AG04449 (cell line): ENCODE measurements at regions of chr3 and their contacts with region 1.

Region 1: DNA sequence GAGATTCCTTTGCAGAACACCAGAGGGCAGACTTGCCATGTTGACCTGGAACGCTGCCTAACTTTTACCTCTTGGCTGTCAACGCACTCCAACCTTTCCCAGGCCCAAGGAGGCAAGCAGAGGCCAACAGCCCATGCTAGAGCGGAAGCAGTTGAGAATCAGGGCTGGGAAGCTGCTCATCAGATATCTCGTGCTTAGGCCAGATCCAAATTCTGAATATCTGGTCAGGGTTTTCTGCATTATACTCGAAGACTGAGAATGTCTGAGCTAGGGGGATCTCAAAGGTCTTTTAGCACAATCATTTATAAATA is 2.5 kb downstream of the XIRP1 start:
- DNase-seq: no peak
- H3K4me3 ChIP-seq: no peak overlapping the region
- CTCF ChIP-seq: peak; percentile 82

Region 2: GRCh38 chr3:39118079-39118478 is 71.8 kb before region 1 on chr3:
- CTCF ChIA-PET with region 1: interaction called, 115 read pairs
- POLR2A ChIA-PET with region 1: no interaction called
- DNase-seq: no peak
- H3K4me3 ChIP-seq: no peak overlapping the region
- CTCF ChIP-seq: no peak

Region 3: GRCh38 chr3:39166134-39166731 is 23.7 kb before region 1 on chr3:
- CTCF ChIA-PET with region 1: interaction called, 13 read pairs
- POLR2A ChIA-PET with region 1: no interaction called
- DNase-seq: peak; percentile 89
- H3K4me3 ChIP-seq: no peak overlapping the region
- CTCF ChIP-seq: peak; percentile 0

Region 4: DNA sequence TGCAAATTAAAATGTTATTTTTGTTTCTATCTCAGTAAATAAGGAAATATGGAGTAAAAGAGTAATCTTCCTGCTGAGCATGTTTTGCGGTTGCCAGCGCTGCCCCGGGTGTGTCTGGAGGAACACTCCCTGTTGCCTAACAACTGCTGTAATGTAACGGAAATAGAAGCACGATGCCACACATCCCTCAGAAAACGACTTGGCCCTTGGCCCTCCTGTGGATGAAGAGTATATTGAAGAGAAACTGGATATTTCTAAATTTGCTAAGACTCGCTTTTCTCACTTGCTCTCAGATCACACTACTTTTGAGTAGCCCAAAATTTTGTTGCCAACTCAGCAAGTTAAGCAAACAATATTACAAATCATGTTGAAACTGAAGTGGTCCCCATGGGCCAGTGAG is 71.0 kb after region 1 on chr3:
- CTCF ChIA-PET with region 1: interaction called, 14 read pairs
- POLR2A ChIA-PET with region 1: no interaction called
- DNase-seq: peak; percentile 67
- H3K4me3 ChIP-seq: no peak overlapping the region
- CTCF ChIP-seq: no peak

Region 5: GRCh38 chr3:39295184-39295775 is 105.4 kb after region 1 on chr3:
- CTCF ChIA-PET with region 1: interaction called, 574 read pairs
- POLR2A ChIA-PET with region 1: no interaction called
- DNase-seq: no peak
- H3K4me3 ChIP-seq: no peak overlapping the region
- CTCF ChIP-seq: no peak